ENCODE measurements at regions of chr1 and their contacts with region 1.

Region 1: DNA sequence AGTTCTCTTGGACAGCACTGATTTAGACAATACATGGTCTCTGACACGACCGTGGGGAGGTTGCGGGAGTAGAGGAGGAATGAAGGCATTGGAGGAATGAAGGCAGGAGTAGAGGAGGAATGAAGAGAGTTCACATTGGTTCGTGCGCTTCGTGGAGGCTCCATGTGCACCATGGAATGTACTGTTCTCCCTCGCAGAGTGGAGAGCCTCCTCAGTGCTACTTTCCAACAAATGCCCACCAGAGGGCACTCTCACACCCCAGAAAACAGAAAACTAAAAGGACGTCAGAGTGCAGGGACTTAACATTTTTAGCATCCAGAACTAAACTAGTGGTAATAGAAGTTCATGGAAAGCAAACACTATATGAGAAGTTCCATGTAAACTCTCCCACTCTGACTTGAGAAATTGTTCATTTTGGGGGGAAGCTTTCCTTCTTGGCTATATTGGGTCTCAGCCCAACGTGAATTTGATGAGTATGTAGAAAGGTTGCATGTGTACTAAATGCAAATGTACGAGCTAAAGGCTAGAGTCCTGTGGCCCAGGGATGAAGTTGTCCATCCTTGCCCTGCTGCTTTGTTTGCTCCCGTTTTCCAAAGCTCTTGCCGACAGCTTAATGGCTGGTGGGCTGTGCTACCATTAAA is 211.6 kb downstream of the LMX1A start:
- DNase-seq: peak; percentile 90
- ATAC-seq: peak; percentile 99
- H3K4me3 ChIP-seq: no peak overlapping the region
- H3K27ac ChIP-seq: no peak overlapping the region
- H3K4me1 ChIP-seq: peaks cover 3% of the 10 kb centered on the region; the same call in 1 of the 2 replicates
- H3K27me3 ChIP-seq: peaks cover 26% of the 10 kb centered on the region
- CTCF ChIP-seq: peak; percentile 96

Region 2: DNA sequence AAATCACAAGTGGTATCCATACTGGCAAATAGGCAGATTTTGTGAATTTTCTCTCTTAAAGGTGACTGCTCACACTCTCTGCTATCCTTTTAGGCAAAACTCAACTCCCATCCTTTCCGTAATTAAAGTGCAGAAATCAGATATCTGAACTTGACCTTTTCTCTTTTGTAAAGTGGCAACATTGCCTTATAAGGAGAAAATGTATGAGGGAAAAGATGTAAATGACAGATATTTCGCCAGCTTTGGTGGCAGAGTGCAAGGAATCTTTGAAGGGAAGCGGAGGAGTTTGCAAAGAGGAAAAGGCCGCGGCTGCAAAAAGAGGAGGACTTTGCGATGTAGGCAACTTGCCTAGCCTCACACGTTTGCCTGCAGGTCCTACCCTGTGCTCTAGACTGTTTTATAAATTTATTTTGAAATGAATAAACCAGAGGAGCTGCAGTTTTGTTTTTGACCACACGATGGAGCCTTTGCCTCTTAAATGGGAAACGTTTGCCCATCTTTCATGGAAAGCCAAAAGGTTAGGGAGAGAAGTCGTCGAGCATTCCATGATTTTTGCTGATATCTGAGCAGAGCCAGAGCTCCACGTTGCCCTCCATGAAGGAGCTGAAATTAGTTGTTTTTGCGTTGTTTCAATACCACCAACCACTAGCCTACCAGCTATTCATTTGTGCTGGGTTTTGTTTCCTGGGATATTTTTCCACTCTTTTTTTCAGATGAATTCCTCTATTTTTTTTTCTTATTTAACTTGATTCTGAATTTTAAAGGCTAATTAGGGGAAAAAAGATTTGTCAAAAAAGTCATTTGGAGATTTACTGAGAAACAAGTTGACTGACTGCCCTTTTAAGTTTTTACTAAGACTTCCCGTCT is 30.6 kb before region 1 on chr1:
- CTCF ChIA-PET with region 1: interaction called, 4 read pairs
- POLR2A ChIA-PET with region 1: no interaction called
- intact Hi-C with region 1: loop called (anchors 1 kb)
- DNase-seq: peak; percentile 91
- ATAC-seq: peak; percentile 27
- H3K4me3 ChIP-seq: no peak overlapping the region
- H3K27ac ChIP-seq: no peak overlapping the region
- H3K4me1 ChIP-seq: peaks cover 14% of the 10 kb centered on the region
- H3K27me3 ChIP-seq: peaks cover 18% of the 10 kb centered on the region
- CTCF ChIP-seq: peak; percentile 95

Region 3: DNA sequence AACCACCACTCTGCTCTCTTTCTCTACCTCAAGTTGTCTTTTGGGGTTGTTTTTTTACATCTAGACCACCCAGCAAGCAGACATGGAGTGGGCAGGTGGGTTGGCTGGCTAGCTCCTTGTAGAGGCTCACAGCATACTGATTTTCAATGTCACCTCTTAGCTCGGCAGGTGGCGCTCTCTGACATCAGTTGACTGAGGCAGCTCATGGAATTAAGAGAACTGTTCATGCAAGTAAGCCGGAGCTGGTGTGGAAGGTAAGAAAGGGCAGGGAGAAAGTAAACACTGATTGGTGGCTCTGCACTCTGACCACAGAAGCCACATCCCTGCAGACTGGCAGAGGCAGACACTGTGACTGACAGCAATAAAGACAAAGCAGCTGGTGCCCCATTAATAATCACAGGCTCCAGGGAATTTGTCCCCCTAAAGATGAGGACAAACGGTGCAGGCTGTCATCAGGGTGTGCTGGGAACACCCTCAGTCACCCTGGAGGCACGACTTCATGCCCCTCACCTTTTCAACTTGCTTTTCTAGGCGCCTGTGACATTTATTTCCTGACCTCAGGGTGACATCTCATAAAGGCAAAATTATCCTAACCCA is 15.2 kb before region 1 on chr1:
- CTCF ChIA-PET with region 1: interaction called, 3 read pairs
- POLR2A ChIA-PET with region 1: no interaction called
- intact Hi-C with region 1: loop called (anchors 2 kb)
- DNase-seq: peak; percentile 88
- ATAC-seq: peak; percentile 88
- H3K4me3 ChIP-seq: no peak overlapping the region
- H3K27ac ChIP-seq: no peak overlapping the region
- H3K4me1 ChIP-seq: peaks cover 5% of the 10 kb centered on the region; the same call in 1 of the 2 replicates
- H3K27me3 ChIP-seq: peaks cover 62% of the 10 kb centered on the region
- CTCF ChIP-seq: peak; percentile 93

Region 4: GRCh38 chr1:165218731-165219130 is 73.9 kb after region 1 on chr1:
- CTCF ChIA-PET with region 1: no interaction called
- POLR2A ChIA-PET with region 1: no interaction called
- intact Hi-C with region 1: loop called (anchors 5 kb)
- DNase-seq: no peak
- ATAC-seq: peak; percentile 38; the same call in 1 of the 2 replicates
- H3K4me3 ChIP-seq: no peak overlapping the region
- H3K27ac ChIP-seq: no peak overlapping the region
- H3K4me1 ChIP-seq: no peaks in the 10 kb centered on the region
- H3K27me3 ChIP-seq: no peaks in the 10 kb centered on the region
- CTCF ChIP-seq: no peak

Region 5: DNA sequence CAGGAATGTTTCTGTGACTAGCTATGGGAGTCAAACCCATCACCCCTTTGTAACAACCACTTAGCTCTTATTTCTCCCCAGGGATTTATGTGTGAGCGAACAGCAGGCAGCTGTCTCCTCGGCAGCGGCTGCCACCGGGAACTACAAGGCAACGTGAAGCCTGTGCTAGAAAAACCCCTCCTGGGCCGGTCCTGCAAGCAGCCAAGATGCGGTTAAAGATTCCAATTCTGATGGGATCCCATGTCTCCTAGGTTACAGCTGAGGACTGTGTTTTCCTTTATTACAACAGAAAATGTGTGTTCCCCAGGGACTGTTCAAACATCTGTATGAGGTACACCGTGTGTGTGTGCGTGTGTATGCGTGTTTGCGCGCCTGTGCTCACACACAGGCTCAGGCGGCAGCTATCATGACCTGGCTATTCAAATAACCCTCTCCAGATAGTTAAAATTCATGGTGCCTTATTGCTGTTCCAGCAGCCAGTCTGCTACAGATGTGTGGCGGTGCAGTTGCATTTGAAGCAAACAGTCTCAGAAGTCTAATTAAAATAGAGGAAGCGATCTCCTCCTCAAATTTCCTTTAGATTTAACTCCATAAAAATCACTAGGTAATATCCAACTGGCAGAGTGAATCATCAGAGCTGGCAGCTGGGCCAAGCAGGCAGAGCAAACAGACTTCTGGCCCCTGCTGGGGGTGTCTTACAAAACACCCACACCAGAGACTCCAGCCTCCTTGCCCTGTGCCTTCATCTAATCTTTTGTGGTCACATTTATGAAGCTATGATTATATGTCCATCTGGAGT is 143.7 kb after region 1 on chr1:
- CTCF ChIA-PET with region 1: interaction called, 5 read pairs
- POLR2A ChIA-PET with region 1: no interaction called
- intact Hi-C with region 1: loop called (anchors 2 kb)
- DNase-seq: peak; percentile 79
- ATAC-seq: peak; percentile 81
- H3K4me3 ChIP-seq: no peak overlapping the region
- H3K27ac ChIP-seq: no peak overlapping the region
- H3K4me1 ChIP-seq: peaks cover 16% of the 10 kb centered on the region
- H3K27me3 ChIP-seq: peaks cover 24% of the 10 kb centered on the region
- CTCF ChIP-seq: peak; percentile 23; the same call in 1 of the 2 replicates

Region 6: DNA sequence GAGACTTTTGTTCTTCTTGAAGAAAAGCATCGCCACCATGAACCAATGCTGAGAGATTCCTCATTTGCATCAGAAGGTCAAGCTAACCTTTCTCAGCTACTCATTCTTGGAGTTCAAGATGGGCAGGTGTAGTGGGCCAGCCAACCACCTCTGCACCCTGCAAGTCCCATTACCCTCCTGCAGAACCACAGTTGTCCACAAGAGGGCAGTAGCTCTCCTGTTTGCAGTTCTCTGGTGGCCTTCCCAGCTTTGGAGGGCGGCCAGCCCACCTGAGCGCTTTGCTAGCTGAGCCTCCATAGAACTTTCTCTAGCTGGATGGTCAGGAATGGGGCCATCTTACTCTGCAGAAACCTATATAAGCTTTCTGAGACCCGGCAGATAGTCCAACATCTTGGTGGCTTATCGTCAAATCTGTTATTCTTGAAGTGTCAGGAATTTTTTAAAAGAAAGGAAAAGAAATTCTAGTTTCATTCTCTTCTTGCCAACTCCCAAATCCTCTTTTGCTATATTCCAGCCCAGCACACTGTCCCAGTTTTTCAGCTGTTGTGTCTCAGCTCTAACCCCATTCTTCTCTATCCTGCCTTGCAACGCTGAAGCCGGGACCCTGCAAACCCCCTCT is 222.6 kb after region 1 on chr1:
- CTCF ChIA-PET with region 1: no interaction called
- POLR2A ChIA-PET with region 1: no interaction called
- intact Hi-C with region 1: loop called (anchors 1 kb)
- DNase-seq: peak; percentile 94
- ATAC-seq: peak; percentile 64
- H3K4me3 ChIP-seq: no peak overlapping the region
- H3K27ac ChIP-seq: no peak overlapping the region
- H3K4me1 ChIP-seq: peaks cover 16% of the 10 kb centered on the region
- H3K27me3 ChIP-seq: no peaks in the 10 kb centered on the region
- CTCF ChIP-seq: peak; percentile 98

Measured in PC-3 (cell line).